Activated CD4-positive, alpha-beta memory T cell treated with anti-CD3 and anti-CD28 coated beads for 36 hours (primary cell): ENCODE measurements at regions of chr6 and their contacts with region 1.

Region 1: DNA sequence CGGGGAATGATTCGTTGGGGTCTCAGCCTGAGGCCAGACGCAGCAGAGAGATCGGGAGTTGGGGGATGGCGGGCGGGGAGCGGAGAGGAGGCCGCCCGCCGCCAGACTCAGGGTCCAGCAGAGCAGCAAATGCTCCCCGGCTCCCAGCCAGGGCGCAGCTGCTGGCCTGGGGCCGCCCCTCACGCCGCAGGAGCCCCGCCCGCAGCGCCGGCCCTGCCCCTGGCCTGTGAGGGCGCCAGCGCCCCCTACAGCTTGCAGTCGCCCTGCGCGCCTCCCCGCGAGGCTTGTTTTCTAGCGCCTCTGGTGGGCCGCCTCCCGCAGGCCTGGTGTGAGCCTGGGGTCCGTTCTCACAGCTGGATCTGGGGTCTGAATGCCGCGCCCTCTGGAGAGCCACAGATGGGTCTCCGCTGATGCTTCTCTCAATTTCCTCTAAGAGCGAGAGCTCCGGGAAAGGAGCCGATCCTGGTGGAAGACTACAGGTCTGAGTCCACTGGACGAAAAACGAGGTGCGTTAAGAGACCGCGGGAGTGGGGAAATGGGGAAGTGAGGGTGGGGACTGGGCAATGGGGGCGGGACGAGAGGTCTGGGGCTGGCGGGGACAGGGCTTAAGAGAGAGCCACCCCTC is 29.9 kb downstream of the TRIM38 start:
- DNase-seq: peak; percentile 95
- H3K4me3 Mint-ChIP-seq: peak overlapping the region; percentile 96
- H3K27ac Mint-ChIP-seq: peak overlapping the region; percentile 89
- H3K4me1 Mint-ChIP-seq: peaks cover 18% of the 10 kb centered on the region
- H3K27me3 Mint-ChIP-seq: no peaks in the 10 kb centered on the region

Region 2: DNA sequence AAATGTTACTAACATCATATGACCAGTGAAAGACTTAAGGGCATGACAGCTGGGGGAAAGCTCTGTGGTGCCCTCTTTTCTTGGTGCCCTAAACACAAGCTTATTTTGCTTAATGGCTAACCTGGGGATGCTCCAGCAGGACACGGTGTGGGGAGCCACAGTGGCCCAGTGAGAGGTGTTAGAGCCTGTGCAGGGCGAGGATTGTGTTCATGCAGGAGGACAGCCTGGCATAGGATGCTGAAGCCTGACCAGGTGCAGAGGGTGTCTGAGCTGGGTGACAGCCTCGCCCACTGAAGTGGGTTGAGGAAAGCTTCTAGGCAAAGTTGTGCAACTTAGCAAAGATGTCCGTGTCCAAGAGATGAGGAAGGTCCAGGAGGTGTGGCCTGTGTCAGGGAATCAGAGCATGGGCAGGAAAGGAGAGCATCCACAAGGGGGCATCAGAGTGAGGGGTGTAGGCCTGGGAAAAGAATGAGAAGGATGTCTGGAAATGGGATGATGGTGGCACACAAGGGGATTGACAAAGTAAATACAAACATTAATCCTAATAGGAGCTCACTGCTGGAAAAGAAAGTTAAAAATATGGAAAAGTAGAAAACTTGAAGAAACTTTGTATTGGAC is 204.1 kb before region 1 on chr6:
- CTCF ChIA-PET with region 1: interaction called, 20 read pairs
- POLR2A ChIA-PET with region 1: no interaction called
- intact Hi-C with region 1: loop called (anchors 5 kb)
- DNase-seq: peak; percentile 63
- H3K4me3 Mint-ChIP-seq: no peak overlapping the region
- H3K27ac Mint-ChIP-seq: no peak overlapping the region
- H3K4me1 Mint-ChIP-seq: peaks cover 11% of the 10 kb centered on the region
- H3K27me3 Mint-ChIP-seq: no peaks in the 10 kb centered on the region

Region 3: GRCh38 chr6:25971187-25971811 is 21.2 kb before region 1 on chr6:
- CTCF ChIA-PET with region 1: interaction called, 27 read pairs
- POLR2A ChIA-PET with region 1: interaction called, 10 read pairs
- intact Hi-C with region 1: loop called (anchors 1 kb)
- DNase-seq: peak; percentile 30
- H3K4me3 Mint-ChIP-seq: peak overlapping the region; percentile 20
- H3K27ac Mint-ChIP-seq: peak overlapping the region; percentile 30
- H3K4me1 Mint-ChIP-seq: peaks cover 80% of the 10 kb centered on the region
- H3K27me3 Mint-ChIP-seq: no peaks in the 10 kb centered on the region

Region 4: DNA sequence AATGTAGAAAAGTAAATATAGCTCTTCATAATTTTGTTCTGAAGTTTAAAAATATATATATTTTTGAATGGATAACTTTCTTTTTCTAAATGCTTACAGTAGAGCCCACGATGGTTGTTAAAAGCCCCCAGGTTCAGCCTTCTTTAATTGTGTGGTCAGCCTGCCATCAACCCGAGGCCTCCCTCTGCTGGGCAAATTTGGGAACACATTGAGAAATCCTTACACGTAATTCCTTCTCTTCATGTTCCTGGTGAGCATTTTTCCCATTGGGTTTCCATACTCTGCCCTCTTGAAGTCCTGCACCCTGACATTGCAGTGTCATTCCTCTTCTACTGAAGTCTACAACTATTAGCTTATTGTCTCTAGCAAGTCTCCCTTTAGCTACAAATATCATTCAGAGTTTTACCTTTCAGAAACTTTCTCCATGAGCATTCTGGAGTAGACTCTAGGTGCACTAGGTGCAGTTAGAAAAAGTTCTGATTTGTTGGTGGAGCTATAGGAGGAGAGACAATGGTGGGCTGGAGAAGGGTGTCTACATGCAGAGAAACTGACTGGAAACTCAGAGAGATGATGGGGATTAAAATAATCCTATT is 10.7 kb after region 1 on chr6:
- CTCF ChIA-PET with region 1: interaction called, 76 read pairs
- POLR2A ChIA-PET with region 1: no interaction called
- intact Hi-C with region 1: no loop called
- DNase-seq: peak; percentile 54
- H3K4me3 Mint-ChIP-seq: no peak overlapping the region
- H3K27ac Mint-ChIP-seq: no peak overlapping the region
- H3K4me1 Mint-ChIP-seq: peaks cover 4% of the 10 kb centered on the region
- H3K27me3 Mint-ChIP-seq: no peaks in the 10 kb centered on the region

Region 5: DNA sequence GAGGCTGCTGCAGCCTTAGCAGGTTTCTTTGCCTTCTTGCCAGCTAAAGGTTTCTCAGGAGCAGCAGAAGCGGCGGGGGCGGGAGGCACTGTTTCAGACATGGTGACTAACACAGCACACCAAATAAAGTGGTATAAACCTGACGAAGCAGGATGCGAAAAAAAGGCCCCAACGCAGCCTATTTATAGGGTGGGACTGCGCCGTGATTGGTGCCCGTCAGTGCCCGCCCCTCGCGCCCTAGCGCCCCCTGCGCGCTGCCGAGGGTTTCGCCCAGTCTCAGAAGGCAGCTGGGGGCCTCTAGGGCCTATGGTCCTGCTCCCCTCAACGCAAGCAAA is 25.1 kb after region 1 on chr6:
- CTCF ChIA-PET with region 1: interaction called, 43 read pairs
- POLR2A ChIA-PET with region 1: interaction called, 25 read pairs
- intact Hi-C with region 1: loop called (anchors 1 kb)
- DNase-seq: peak; percentile 94
- H3K4me3 Mint-ChIP-seq: peak overlapping the region; percentile 74
- H3K27ac Mint-ChIP-seq: peak overlapping the region; percentile 94
- H3K4me1 Mint-ChIP-seq: peaks cover 31% of the 10 kb centered on the region
- H3K27me3 Mint-ChIP-seq: no peaks in the 10 kb centered on the region